Kidney (tissue), 22 donors: ENCODE measurements at regions of chr18 and their contacts with region 1.

Region 1: DNA sequence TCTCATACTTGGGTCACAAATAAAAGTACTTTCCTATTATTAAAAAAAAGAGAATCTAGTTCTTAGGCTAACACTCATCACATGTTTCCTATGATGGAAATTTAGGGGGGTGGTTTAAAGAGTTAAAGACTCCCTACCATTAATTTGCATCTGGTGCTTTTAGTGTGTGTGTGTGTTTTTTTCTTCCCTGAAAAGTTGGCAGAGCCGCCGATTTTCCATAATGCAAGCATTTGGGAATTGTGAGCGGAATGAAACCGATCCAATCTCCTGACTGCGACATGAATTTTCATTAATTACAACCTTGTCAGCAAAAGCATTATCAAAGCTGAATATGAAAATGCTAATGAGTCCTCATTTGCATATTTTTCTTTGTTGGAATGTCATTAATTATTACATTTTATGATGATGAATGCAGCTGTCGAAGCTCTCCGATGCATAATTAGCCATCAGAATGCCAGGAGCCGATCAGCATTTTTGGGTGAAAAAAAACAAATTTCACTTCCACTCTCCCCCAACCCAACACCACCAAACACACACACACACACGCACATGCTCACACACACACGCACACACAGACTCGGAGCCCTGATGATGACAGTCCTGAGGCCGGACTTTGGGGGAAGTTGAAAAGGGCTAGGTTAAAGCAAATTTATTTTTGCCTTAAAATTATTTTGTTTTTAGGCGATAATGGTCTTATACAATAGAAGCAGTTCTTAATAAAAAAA is 165.4 kb downstream of the TCF4 start:
- DNase-seq: peak in 2 of 5 donors; percentile 18 to 75
- H3K4me3 ChIP-seq: peak overlapping the region; percentile 49 to 54 (median 53)
- H3K27ac ChIP-seq: no peak overlapping the region
- H3K4me1 ChIP-seq: no peaks in the 10 kb centered on the region
- H3K27me3 ChIP-seq: no peaks in the 10 kb centered on the region
- CTCF ChIP-seq: no peak

Region 2: DNA sequence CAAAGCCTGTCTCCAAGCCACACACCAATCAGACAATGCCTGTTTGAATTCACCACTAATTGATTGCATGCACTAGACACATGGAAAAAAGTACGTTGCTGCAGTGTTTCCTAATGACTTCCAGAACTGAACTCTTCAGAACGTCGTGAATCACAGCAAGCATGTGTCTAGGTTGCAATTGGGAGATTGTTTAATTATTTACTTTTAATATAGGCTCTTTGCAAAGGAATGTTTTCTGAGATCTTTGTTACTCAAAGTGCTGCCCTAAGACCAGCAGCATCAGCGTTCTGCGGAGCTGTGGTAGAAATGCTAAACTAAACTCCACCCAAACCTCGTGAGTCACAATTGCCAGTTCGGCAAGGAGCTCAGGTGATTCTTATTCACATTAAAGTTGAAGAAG is 410.6 kb before region 1 on chr18:
- intact Hi-C with region 1: no loop called
- DNase-seq: peak in 1 of 5 donors; percentile 4
- H3K4me3 ChIP-seq: no peak overlapping the region
- H3K27ac ChIP-seq: no peak overlapping the region
- H3K4me1 ChIP-seq: no peaks in the 10 kb centered on the region
- H3K27me3 ChIP-seq: no peaks in the 10 kb centered on the region
- CTCF ChIP-seq: no peak

Region 3: GRCh38 chr18:55821219-55821618 is 398.6 kb after region 1 on chr18:
- intact Hi-C with region 1: no loop called
- DNase-seq: peak in 1 of 5 donors; percentile 24
- H3K4me3 ChIP-seq: no peak overlapping the region
- H3K27ac ChIP-seq: no peak overlapping the region
- H3K4me1 ChIP-seq: no peaks in the 10 kb centered on the region
- H3K27me3 ChIP-seq: no peaks in the 10 kb centered on the region
- CTCF ChIP-seq: no peak

Region 4: GRCh38 chr18:56575819-56576663 is 1153.4 kb after region 1 on chr18:
- intact Hi-C with region 1: loop called (anchors 10 kb)
- DNase-seq: peak in 2 of 5 donors; percentile 75 to 85
- H3K4me3 ChIP-seq: no peak overlapping the region
- H3K27ac ChIP-seq: no peak overlapping the region
- H3K4me1 ChIP-seq: peaks cover 0 to 6% (median 6%) of the 10 kb centered on the region in 3 donors
- H3K27me3 ChIP-seq: no peaks in the 10 kb centered on the region
- CTCF ChIP-seq: peak; percentile 61